Caco-2 (cell line): ENCODE measurements at regions of chr10 and their contacts with region 1.

Region 1: DNA sequence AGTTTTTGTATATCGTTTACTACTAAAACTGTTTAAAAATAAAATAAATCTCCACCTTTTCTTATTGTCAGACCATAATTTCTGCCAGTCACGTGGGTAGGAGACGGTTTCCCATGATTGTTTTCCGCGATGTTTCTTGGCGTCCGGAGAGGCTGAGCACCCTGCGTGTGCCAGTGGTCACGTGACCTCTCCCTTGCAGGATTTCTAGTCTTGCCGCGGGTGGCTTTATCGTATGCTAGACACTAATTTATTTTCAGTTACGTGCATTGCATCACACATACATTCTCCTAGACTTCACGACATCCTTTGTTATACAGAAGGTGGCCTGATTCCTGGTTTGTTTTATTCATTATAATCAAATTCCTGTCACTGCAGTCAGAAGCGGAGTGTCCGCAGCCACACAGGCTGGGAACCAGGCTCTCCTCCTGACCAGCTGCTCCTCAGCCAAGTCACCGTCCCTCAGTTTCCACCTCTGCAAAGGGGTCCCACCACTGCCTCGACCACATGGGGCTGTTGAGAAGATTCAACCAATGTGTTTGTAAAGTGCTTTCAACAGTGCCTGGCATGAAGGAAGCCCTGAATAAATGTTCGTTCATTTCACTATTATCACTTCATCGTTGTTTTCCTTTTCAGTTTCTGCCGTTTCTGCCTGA is 203.2 kb upstream of the PPP2R2D start:
- DNase-seq: peak in 1 of 2 experiments; percentile 20
- H3K4me3 ChIP-seq: no peak overlapping the region
- H3K4me3 Mint-ChIP-seq: no peak overlapping the region
- H3K27ac Mint-ChIP-seq: no peak overlapping the region
- H3K4me1 ChIP-seq: no peaks in the 10 kb centered on the region
- H3K4me1 Mint-ChIP-seq: no peaks in the 10 kb centered on the region
- H3K27me3 ChIP-seq: no peaks in the 10 kb centered on the region
- H3K27me3 Mint-ChIP-seq: peaks cover 12% of the 10 kb centered on the region
- CTCF ChIP-seq: no peak

Region 2: GRCh38 chr10:131786756-131787605 is 89.4 kb after region 1 on chr10:
- CTCF ChIA-PET with region 1: no interaction called
- POLR2A ChIA-PET with region 1: no interaction called
- intact Hi-C with region 1: loop called (anchors 10 kb)
- DNase-seq: peak in 1 of 2 experiments; percentile 41
- H3K4me3 ChIP-seq: no peak overlapping the region
- H3K4me3 Mint-ChIP-seq: no peak overlapping the region
- H3K27ac Mint-ChIP-seq: no peak overlapping the region
- H3K4me1 ChIP-seq: no peaks in the 10 kb centered on the region
- H3K4me1 Mint-ChIP-seq: no peaks in the 10 kb centered on the region
- H3K27me3 ChIP-seq: no peaks in the 10 kb centered on the region
- H3K27me3 Mint-ChIP-seq: no peaks in the 10 kb centered on the region
- CTCF ChIP-seq: peak; percentile 60 to 79